ENCODE measurements at regions of chr2 and their contacts with region 1.

Region 1: DNA sequence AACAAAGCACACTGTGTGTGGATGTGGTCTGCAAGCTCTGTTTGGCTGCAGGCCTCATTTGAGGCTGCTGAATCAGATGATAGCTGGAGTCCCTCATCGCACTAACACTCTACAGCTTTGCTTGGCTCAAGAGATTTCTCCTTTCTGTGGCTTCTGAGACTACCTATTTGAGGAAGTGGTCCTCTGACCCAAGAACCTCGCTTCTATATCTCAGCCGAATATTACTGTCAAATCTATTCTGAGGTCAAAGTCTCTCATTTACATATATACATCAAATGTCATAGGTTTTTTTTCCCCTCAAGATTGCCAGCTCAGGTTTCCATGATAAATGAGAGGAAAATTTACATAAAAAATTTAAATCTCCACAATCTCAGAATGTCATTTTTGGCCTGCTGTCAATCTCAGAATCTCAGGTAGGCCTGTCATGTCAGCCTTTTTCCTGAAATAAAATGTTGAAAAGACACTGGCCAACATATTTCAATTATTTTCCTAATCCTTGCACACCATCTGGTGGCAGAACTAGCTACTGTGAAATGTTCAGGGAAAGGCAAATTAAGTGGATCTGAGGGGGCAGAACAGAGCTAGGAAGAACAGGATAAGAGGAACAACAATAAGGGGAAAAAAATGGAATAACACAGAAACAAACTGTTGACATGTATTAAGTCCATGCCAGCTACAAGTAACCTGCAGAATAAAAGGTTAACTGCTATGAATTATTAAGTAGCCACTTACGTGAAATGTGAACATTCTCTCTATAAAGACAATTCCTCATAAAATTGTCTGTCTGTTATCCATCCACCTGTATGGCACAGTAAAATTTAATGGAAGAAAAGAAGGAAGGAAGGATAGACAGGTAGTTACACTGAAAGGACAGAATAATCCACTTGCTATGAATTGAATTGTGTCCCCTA is 39.3 kb downstream of the AP1S3 start:
- DNase-seq: peak in 1 of 35 experiments; percentile 36
- ATAC-seq: no peak
- H3K4me3 ChIP-seq: no peak overlapping the region
- H3K4me3 Mint-ChIP-seq: no peak overlapping the region
- H3K27ac ChIP-seq: no peak overlapping the region
- H3K27ac Mint-ChIP-seq: no peak overlapping the region
- H3K4me1 ChIP-seq: no peaks in the 10 kb centered on the region
- H3K4me1 Mint-ChIP-seq: peaks cover 0 to 2% (median 0%) of the 10 kb centered on the region in 3 donors
- H3K27me3 ChIP-seq: no peaks in the 10 kb centered on the region
- H3K27me3 Mint-ChIP-seq: no peaks in the 10 kb centered on the region

Region 2: GRCh38 chr2:223727562-223727961 is 70.5 kb before region 1 on chr2:
- CTCF ChIA-PET with region 1: interaction called in 1 of 2 experiments, 11 read pairs
- POLR2A ChIA-PET with region 1: no interaction called
- DNase-seq: peak in 20 of 35 experiments; percentile 1 to 64 (median 12)
- ATAC-seq: peak in 3 of 4 experiments; percentile 45 to 60 (median 50)
- H3K4me3 ChIP-seq: no peak overlapping the region
- H3K4me3 Mint-ChIP-seq: no peak overlapping the region
- H3K27ac ChIP-seq: no peak overlapping the region
- H3K27ac Mint-ChIP-seq: no peak overlapping the region
- H3K4me1 ChIP-seq: no peaks in the 10 kb centered on the region
- H3K4me1 Mint-ChIP-seq: no peaks in the 10 kb centered on the region
- H3K27me3 ChIP-seq: no peaks in the 10 kb centered on the region
- H3K27me3 Mint-ChIP-seq: peaks cover 4 to 11% of the 10 kb centered on the region in 2 donors

Region 3: DNA sequence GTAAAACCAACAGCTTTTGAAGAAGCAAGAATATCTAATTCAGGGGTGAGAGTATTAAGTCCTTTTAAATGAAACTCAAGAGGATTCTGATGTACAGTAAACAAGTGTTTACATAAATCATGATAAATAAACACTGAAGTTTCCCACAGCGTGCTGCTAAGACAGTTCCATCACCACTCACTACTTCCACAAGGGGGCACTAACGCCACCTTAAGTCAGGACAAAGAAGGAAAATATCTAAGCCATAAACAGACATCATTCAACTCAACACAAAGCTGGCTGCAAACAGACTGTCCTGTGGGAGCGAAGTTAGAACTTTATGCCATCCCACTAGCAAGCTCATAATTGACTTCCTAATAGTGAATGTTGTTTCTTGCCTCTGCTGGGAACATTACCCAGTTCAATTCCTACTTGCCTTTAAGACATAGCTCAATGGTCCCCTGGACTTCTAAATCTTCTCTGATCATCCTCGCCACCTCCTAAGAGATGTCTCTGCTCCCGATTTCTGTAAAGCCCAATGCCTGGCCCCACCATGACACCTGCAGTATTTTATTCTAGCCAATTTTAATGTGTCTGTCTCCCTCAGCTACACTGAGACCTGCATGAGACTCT is 195.7 kb after region 1 on chr2:
- CTCF ChIA-PET with region 1: no interaction called
- POLR2A ChIA-PET with region 1: no interaction called
- DNase-seq: peak; percentile 6 to 81 (median 46)
- ATAC-seq: peak in 3 of 4 experiments; percentile 51 to 71 (median 70)
- H3K4me3 ChIP-seq: no peak overlapping the region
- H3K4me3 Mint-ChIP-seq: no peak overlapping the region
- H3K27ac ChIP-seq: no peak overlapping the region
- H3K27ac Mint-ChIP-seq: no peak overlapping the region
- H3K4me1 ChIP-seq: no peaks in the 10 kb centered on the region
- H3K4me1 Mint-ChIP-seq: no peaks in the 10 kb centered on the region
- H3K27me3 ChIP-seq: peaks cover 0 to 2% of the 10 kb centered on the region in 2 experiments
- H3K27me3 Mint-ChIP-seq: no peaks in the 10 kb centered on the region